Heart left ventricle (tissue), 16 donors: ENCODE measurements at regions of chr4 and their contacts with region 1.

Region 1: GRCh38 chr4:157045507-157046127 is 30.3 kb upstream of the GLRB start:
- DNase-seq: peak in 3 of 5 donors; percentile 18 to 25 (median 20)
- ATAC-seq: peak; percentile 61 to 91 (median 84)
- H3K4me3 ChIP-seq: no peak overlapping the region
- H3K27ac ChIP-seq: no peak overlapping the region
- H3K4me1 ChIP-seq: no peaks in the 10 kb centered on the region
- H3K27me3 ChIP-seq: no peaks in the 10 kb centered on the region
- CTCF ChIP-seq: peak; percentile 47 to 77 (median 67)
- POLR2A ChIP-seq: no peak

Region 2: GRCh38 chr4:156475322-156475721 is 570.3 kb before region 1 on chr4:
- intact Hi-C with region 1: loop called in 9 of 10 experiments (anchors 1 to 10 kb)
- DNase-seq: no peak
- ATAC-seq: peak; percentile 57 to 85 (median 65)
- H3K4me3 ChIP-seq: no peak overlapping the region
- H3K27ac ChIP-seq: no peak overlapping the region
- H3K4me1 ChIP-seq: no peaks in the 10 kb centered on the region
- H3K27me3 ChIP-seq: peaks cover 0 to 4% (median 0%) of the 10 kb centered on the region in 9 donors
- CTCF ChIP-seq: peak; percentile 24 to 70 (median 50)
- POLR2A ChIP-seq: no peak

Region 3: GRCh38 chr4:156686120-156686519 is 359.5 kb before region 1 on chr4:
- intact Hi-C with region 1: loop called in 1 of 10 experiments (anchors 10 kb)
- DNase-seq: no peak
- ATAC-seq: no peak
- H3K4me3 ChIP-seq: no peak overlapping the region
- H3K27ac ChIP-seq: no peak overlapping the region
- H3K4me1 ChIP-seq: no peaks in the 10 kb centered on the region
- H3K27me3 ChIP-seq: no peaks in the 10 kb centered on the region
- CTCF ChIP-seq: no peak
- POLR2A ChIP-seq: no peak

Region 4: GRCh38 chr4:156968479-156968984 is 77.1 kb before region 1 on chr4:
- intact Hi-C with region 1: loop called in 7 of 10 experiments (anchors 5 to 10 kb)
- DNase-seq: peak in 3 of 5 donors; percentile 53 to 57 (median 56)
- ATAC-seq: peak in 3 of 4 donors; percentile 36 to 40 (median 39)
- H3K4me3 ChIP-seq: peak overlapping the region in 5 of 12 donors; percentile 72 to 91 (median 78)
- H3K27ac ChIP-seq: peak overlapping the region in 7 of 12 donors; percentile 1 to 83 (median 15)
- H3K4me1 ChIP-seq: peaks cover 0 to 56% (median 8%) of the 10 kb centered on the region in 12 donors
- H3K27me3 ChIP-seq: peaks cover 0 to 3% (median 0%) of the 10 kb centered on the region in 9 donors
- CTCF ChIP-seq: peak; percentile 62 to 88 (median 75)
- POLR2A ChIP-seq: no peak

Region 5: DNA sequence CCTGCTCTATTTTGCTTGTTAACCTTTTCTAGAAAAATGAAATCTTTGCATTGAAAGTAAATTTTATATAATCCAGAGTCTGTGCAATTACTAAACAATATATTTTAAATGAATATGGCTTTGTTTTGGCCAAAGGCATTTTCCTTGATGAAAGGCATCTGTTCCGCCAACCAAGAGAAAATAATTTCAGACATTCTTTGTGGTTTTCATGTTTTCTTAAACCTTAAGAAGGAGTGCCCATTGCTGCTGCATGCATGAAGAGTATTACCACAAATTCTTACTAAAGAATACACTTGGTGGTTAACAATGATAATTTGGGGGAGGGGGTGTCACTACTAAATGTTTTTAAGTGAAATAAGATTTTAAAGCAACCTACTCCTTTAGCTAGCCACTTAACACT is 71.4 kb before region 1 on chr4:
- intact Hi-C with region 1: loop called in 8 of 10 experiments (anchors 2 to 10 kb)
- DNase-seq: no peak
- ATAC-seq: no peak
- H3K4me3 ChIP-seq: no peak overlapping the region
- H3K27ac ChIP-seq: no peak overlapping the region
- H3K4me1 ChIP-seq: peaks cover 0 to 22% (median 2%) of the 10 kb centered on the region in 12 donors
- H3K27me3 ChIP-seq: peaks cover 0 to 3% (median 0%) of the 10 kb centered on the region in 9 donors
- CTCF ChIP-seq: no peak
- POLR2A ChIP-seq: no peak

Region 6: GRCh38 chr4:156983366-156983765 is 62.3 kb before region 1 on chr4:
- intact Hi-C with region 1: loop called in 4 of 10 experiments (anchors 10 kb)
- DNase-seq: no peak
- ATAC-seq: no peak
- H3K4me3 ChIP-seq: no peak overlapping the region
- H3K27ac ChIP-seq: no peak overlapping the region
- H3K4me1 ChIP-seq: no peaks in the 10 kb centered on the region
- H3K27me3 ChIP-seq: no peaks in the 10 kb centered on the region
- CTCF ChIP-seq: peak in 7 of 12 donors; percentile 15 to 41 (median 28)
- POLR2A ChIP-seq: no peak

Region 7: DNA sequence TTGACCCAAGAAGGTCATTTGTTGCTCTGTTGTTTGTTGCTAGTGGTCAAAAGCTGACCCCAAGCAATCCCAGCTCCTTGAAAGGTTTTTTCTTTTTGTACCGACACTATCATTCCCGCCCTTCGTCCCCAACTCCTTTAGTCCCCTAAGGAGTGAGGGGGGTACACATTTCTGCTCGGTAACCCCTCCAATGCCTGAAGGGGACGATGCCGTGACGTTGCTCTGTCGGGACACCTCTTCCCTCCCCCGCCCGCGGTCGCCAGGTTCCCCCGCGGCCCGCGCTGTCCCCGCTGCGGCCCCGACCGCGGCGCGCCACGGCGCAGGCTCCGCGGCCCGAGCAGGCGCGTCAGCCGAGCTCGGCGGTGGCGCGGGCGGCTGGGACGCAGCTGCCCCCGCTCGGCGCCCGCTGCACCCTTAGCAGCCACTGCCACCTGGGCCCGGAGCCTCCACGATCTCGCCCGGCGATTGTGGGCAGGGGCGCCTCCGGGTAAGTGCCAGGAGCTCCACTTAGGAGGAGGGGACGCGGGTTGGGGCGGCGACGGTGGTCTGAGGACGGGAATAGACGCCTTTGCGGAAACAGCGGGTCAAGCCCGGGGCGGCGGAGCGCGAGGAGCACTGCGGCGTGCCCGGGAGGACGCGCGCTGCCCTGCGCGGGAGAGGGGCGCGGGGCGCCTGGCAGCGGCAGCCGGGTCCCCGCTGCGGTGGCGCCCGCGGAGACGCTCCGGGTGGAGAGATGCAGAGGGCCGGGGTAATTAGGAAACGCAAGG is 30.4 kb after region 1 on chr4 and contains the start of gene GLRB:
- intact Hi-C with region 1: no loop called
- DNase-seq: peak in 4 of 5 donors; percentile 20 to 62 (median 34)
- ATAC-seq: peak; percentile 32 to 98 (median 92)
- H3K4me3 ChIP-seq: peak within 1 kb of the TSS; percentile 46 to 85 (median 62)
- H3K27ac ChIP-seq: peak within 1 kb of the TSS in 6 of 12 donors; percentile 37 to 68 (median 56)
- H3K4me1 ChIP-seq: peaks cover 0 to 12% (median 0%) of the 10 kb centered on the region in 12 donors
- H3K27me3 ChIP-seq: peaks cover 0 to 25% (median 0%) of the 10 kb centered on the region in 9 donors
- CTCF ChIP-seq: no peak
- POLR2A ChIP-seq: no peak
- total RNA-seq, gene GLRB: 9.8 to 21.7 (median 13.4) TPM